ENCODE measurements at regions of chr16 and their contacts with region 1.

Region 1: GRCh38 chr16:19113453-19114351 is at the start of gene ITPRIPL2:
- DNase-seq: peak; percentile 83
- H3K4me3 ChIP-seq: peak within 1 kb of the TSS; percentile 26 to 66 (median 44)
- H3K27ac ChIP-seq: peak within 1 kb of the TSS; percentile 89
- H3K4me1 ChIP-seq: peaks cover 38% of the 10 kb centered on the region
- H3K27me3 ChIP-seq: no peaks in the 10 kb centered on the region
- CTCF ChIP-seq: no peak
- POLR2A ChIP-seq: peak; percentile 76
- total RNA-seq, gene ITPRIPL2: 40.8 and 43.2 TPM in 2 replicates

Region 2: GRCh38 chr16:18801197-18801972 is 312.3 kb before region 1 on chr16 and contains the start of gene ARL6IP1:
- CTCF ChIA-PET with region 1: interaction called, 3 read pairs
- POLR2A ChIA-PET with region 1: no interaction called
- dilution Hi-C with region 1: loop called (anchors 25 kb)
- intact Hi-C with region 1: loop called (anchors 10 kb)
- DNase-seq: peak; percentile 100
- H3K4me3 ChIP-seq: peak within 1 kb of the TSS; percentile 77 to 98 (median 92)
- H3K27ac ChIP-seq: peak within 1 kb of the TSS; percentile 71
- H3K4me1 ChIP-seq: peaks cover 62% of the 10 kb centered on the region
- H3K27me3 ChIP-seq: no peaks in the 10 kb centered on the region
- CTCF ChIP-seq: peak; percentile 95 to 96
- POLR2A ChIP-seq: peak; percentile 100
- total RNA-seq, gene ARL6IP1: 202 and 251 TPM in 2 replicates

Region 3: GRCh38 chr16:19044769-19045168 is 68.9 kb before region 1 on chr16:
- CTCF ChIA-PET with region 1: no interaction called
- POLR2A ChIA-PET with region 1: no interaction called
- dilution Hi-C with region 1: no loop called
- intact Hi-C with region 1: no loop called
- DNase-seq: no peak
- H3K4me3 ChIP-seq: no peak overlapping the region
- H3K27ac ChIP-seq: no peak overlapping the region
- H3K4me1 ChIP-seq: no peaks in the 10 kb centered on the region
- H3K27me3 ChIP-seq: no peaks in the 10 kb centered on the region
- CTCF ChIP-seq: no peak
- POLR2A ChIP-seq: no peak

Region 4: GRCh38 chr16:19094541-19095365 is 18.9 kb before region 1 on chr16:
- CTCF ChIA-PET with region 1: interaction called, 20 read pairs
- POLR2A ChIA-PET with region 1: interaction called, 6 read pairs
- dilution Hi-C with region 1: no loop called
- intact Hi-C with region 1: loop called (anchors 1 kb)
- DNase-seq: no peak
- H3K4me3 ChIP-seq: no peak overlapping the region
- H3K27ac ChIP-seq: no peak overlapping the region
- H3K4me1 ChIP-seq: peaks cover 17% of the 10 kb centered on the region
- H3K27me3 ChIP-seq: no peaks in the 10 kb centered on the region
- CTCF ChIP-seq: no peak
- POLR2A ChIP-seq: no peak

Region 5: DNA sequence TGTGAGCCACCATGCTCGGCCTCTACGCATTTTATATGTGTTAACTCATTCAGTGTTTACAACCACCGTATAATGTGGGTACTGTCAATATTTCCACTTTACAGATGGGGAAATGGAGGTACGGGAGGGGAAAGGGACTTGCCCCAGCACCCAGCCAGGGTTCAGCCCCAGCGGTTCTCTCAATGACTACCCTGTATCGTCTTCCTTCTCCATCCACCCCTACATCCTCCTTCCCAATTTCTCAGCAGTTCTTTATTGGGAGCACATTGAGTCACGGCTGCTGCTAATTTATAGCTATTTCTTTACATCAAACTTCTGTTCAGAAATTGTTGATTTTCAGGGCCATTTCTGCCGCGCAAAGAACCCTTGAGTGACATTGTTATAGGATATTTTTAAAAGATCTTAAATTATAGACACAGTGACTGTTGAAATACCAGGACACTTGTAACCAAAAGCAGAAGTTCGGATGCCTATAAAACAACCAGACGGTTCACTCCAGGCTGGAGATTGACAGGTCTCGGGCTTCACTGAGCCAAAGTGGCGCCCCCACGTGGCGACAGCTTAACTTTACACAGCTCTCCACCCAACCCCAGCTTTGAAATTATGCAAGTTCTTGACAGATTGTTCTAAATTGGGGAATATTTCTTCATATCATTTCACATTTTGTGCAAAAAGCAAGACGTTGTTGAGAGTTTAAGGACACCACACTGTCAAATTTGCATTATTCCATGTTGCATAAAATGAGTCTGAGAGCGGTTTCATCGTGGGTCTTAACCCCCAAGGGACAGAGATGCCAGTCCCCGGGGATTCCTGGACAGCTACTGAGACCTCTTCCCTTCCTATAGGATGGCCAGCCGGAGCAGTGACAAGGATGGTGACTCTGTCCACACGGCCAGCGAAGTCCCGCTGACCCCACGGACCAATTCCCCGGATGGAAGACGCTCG is 66.1 kb after region 1 on chr16:
- CTCF ChIA-PET with region 1: interaction called, 37 read pairs
- POLR2A ChIA-PET with region 1: no interaction called
- dilution Hi-C with region 1: no loop called
- intact Hi-C with region 1: loop called (anchors 5 kb)
- DNase-seq: peak; percentile 63
- H3K4me3 ChIP-seq: no peak overlapping the region
- H3K27ac ChIP-seq: no peak overlapping the region
- H3K4me1 ChIP-seq: peaks cover 2% of the 10 kb centered on the region
- H3K27me3 ChIP-seq: peaks cover 0 to 6% of the 10 kb centered on the region in 2 experiments
- CTCF ChIP-seq: peak; percentile 73 to 87
- POLR2A ChIP-seq: no peak

Region 6: DNA sequence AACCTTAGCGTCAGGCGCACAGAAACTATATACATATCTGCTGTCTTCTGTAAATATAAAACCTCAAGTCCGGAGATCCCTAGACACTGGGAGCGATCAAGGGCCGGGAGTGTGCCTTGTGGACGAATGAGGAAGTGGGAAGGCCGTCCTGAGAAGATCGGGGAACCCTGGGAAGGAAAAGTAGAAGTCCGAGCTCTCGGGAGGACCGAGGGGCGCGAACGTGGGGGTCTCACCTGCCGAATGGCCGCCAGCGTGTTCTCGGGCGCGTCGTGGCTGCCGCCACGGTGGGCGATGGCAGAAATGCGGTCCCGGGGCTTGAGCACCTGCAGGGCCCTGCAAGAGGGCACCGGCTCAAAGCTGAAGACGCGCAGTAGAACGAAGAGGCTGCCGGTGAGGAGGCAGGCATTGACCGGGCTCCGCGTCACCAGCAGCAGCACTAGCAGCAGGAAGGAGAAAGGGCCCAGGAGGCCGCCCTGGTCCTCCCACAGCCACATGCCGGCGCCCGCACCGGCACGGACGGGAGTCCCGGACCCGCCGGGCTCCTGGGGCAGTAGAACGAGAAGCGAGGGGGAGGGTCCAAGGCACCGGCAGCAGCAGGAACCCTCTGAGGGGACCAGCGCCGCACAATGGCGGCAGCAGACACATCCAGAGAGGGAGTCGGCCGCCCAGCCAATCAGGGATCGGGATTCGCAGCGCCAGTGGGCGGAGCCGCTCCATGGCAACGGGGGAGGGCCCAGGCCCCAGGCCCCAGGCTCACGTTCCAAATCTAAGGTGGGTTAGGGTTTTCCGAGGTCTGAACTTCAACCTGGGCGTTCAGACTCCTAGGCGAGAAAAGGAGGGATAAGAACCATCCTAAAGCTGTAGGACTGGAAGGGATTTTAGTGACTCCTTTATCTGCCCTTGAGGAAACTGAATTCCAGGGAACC is 408.0 kb after region 1 on chr16 and contains the start of gene GDE1:
- CTCF ChIA-PET with region 1: no interaction called
- POLR2A ChIA-PET with region 1: no interaction called
- dilution Hi-C with region 1: no loop called
- intact Hi-C with region 1: loop called (anchors 5 kb)
- DNase-seq: peak; percentile 92
- H3K4me3 ChIP-seq: peak within 1 kb of the TSS; percentile 88 to 93 (median 89)
- H3K27ac ChIP-seq: peak within 1 kb of the TSS; percentile 50
- H3K4me1 ChIP-seq: peaks cover 21% of the 10 kb centered on the region
- H3K27me3 ChIP-seq: no peaks in the 10 kb centered on the region
- CTCF ChIP-seq: peak in 1 of 2 donors; percentile 64
- POLR2A ChIP-seq: peak; percentile 80
- total RNA-seq, gene GDE1: 50.5 and 51.5 TPM in 2 replicates